HEK293 (cell line): ENCODE measurements at regions of chr15 and their contacts with region 1.

Region 1: GRCh38 chr15:92881802-92882696 is 18.1 kb upstream of the CHD2 start:
- H3K4me3 ChIP-seq: peak overlapping the region; percentile 27; the same call in 1 of the 2 replicates
- H3K27ac ChIP-seq: peak overlapping the region; percentile 99
- H3K4me1 ChIP-seq: peaks cover 23% of the 10 kb centered on the region
- CTCF ChIP-seq: no peak

Region 2: DNA sequence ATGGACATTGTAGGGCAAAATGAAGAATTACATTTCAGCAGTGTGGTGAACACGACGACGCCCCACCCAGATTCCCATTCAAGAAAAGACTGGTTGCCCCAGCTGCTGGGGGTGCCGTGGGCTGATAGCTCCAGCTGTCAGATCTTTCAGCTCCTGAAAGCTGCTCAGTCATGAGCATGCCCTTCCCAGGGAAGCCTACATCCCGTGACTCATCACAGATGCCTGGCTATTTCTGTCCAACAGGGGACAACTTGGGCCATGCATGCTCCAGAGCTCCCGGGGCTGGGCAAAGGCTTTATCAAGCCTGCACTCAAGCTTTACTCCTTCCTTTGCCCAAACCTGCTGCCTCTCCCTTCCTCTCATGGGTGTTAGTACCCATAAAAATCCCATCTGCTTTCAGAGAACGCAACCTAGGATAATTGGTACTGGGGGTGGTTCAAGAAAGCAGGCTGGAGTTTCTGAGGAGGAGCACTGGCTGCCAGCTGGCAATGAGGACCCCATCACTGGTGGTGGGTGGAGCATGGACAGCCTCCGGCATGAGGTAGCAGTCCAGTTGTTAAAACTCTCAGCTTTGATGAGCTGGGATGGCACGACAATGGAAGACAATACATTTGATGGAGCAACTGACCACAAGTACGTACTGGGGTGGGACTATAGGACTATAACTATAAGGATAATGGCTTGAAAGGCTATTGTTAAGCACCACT is 504.8 kb before region 1 on chr15:
- CTCF ChIA-PET with region 1: no interaction called
- POLR2A ChIA-PET with region 1: no interaction called
- H3K4me3 ChIP-seq: no peak overlapping the region
- H3K27ac ChIP-seq: no peak overlapping the region
- H3K4me1 ChIP-seq: no peaks in the 10 kb centered on the region
- CTCF ChIP-seq: no peak

Region 3: GRCh38 chr15:92803847-92804609 is 78.0 kb before region 1 on chr15:
- CTCF ChIA-PET with region 1: interaction called, 15 read pairs
- POLR2A ChIA-PET with region 1: interaction called, 280 read pairs
- H3K4me3 ChIP-seq: no peak overlapping the region
- H3K27ac ChIP-seq: peak overlapping the region; percentile 78
- H3K4me1 ChIP-seq: peaks cover 8% of the 10 kb centered on the region; the same call in 1 of the 2 replicates
- CTCF ChIP-seq: no peak

Region 4: GRCh38 chr15:92820236-92821021 is 61.6 kb before region 1 on chr15:
- CTCF ChIA-PET with region 1: interaction called, 7 read pairs
- POLR2A ChIA-PET with region 1: interaction called, 238 read pairs
- H3K4me3 ChIP-seq: peak overlapping the region; percentile 39
- H3K27ac ChIP-seq: peak overlapping the region; percentile 98
- H3K4me1 ChIP-seq: peaks cover 40% of the 10 kb centered on the region
- CTCF ChIP-seq: no peak

Region 5: GRCh38 chr15:92831655-92832328 is 50.3 kb before region 1 on chr15:
- CTCF ChIA-PET with region 1: interaction called, 4 read pairs
- POLR2A ChIA-PET with region 1: interaction called, 193 read pairs
- H3K4me3 ChIP-seq: peak overlapping the region; percentile 4
- H3K27ac ChIP-seq: peak overlapping the region; percentile 89
- H3K4me1 ChIP-seq: peaks cover 29% of the 10 kb centered on the region
- CTCF ChIP-seq: no peak

Region 6: DNA sequence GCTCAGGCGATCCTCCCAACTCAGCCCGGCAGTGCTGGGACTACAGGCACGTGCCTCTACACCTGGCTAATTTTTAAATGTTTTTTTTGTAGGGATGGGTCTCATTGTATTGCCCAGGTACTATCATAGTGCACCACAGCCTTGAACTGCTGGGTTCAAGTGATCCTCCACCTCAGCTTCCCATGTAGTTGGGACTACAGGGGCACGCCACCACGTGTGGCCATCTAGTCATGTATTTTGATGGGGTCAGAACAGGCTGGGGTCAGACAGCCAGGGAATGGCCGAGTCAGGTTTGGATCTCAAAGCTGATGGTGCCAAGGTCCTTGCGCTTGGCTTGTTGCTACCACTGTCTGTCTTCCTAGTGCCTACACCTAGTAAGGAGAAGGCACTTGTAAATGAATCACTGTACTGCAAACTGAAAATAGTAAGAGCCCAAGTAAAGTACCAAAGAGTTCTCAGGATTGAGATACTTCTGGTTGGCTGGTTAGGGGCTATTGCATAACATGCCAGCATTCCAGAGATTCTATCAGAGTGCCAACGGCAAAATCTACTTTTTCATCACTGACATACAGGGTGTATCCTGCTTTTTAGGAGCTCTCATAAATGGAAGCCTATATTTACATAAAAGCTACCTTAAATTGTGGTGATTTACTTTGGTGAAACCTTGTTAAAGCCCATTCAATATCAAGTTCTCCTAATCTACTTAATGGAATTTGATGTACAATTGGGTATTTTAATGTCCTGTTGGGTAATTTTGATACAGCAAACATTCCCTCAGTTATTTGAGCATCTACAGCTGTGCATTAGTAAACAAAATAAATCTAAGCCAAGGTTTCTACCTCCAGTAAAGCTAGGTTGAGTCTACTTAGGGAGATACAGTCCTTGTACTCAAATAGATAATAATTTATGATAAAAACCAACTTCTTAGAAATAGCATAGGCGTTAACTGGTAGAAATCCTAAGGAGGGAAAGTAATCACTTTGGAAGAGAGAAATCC is 12.8 kb before region 1 on chr15:
- CTCF ChIA-PET with region 1: interaction called, 4 read pairs
- POLR2A ChIA-PET with region 1: interaction called, 31 read pairs
- H3K4me3 ChIP-seq: no peak overlapping the region
- H3K27ac ChIP-seq: no peak overlapping the region
- H3K4me1 ChIP-seq: peaks cover 3% of the 10 kb centered on the region; the same call in 1 of the 2 replicates
- CTCF ChIP-seq: no peak

Region 7: DNA sequence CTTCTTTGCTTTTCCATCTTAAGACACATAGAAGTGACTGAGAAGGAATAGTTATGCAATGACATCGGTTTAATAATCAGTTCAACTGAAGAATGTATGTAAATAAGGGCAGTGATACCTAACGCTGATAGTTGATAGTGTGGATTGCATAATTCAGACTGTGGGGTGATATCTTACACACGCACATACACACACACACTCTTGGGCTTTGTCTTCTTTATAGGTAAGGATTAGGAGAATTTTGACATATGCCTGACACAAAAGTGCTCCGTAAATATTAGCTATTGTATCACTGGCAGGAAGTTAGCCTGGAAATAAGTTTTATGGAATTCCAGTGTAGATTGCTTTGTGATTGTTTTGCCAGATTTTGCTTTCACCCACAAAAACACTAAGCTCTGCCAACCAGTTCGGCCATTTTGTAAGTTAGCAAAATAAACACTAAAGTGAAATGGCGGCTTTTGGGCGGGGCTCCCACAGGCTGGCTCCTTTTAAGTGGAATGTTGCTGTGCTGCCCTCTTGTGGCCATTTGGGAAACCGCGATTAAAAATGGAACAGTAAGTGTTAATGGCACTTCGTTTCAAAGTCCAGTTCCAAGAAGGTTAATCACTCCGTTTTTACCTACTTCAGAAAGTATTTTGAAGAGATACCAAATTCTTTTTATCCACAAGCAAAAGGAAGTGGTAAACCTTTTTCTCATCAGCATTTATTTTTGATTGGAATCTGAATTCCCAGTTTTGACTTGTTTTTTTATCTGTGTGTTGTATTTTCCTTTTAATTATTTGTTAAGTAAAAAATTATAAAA is 35.8 kb after region 1 on chr15:
- CTCF ChIA-PET with region 1: interaction called, 7 read pairs
- POLR2A ChIA-PET with region 1: interaction called, 30 read pairs
- H3K4me3 ChIP-seq: no peak overlapping the region; the same call in 1 of the 2 replicates
- H3K27ac ChIP-seq: peak overlapping the region; percentile 88
- H3K4me1 ChIP-seq: peaks cover 48% of the 10 kb centered on the region
- CTCF ChIP-seq: peak; percentile 76; the same call in 1 of the 2 replicates